ENCODE measurements at regions of chrX and their contacts with region 1.

Region 1: GRCh38 chrX:70618467-70618866 is 173.8 kb downstream of the DLG3 start:
- DNase-seq: no peak
- H3K4me3 ChIP-seq: no peak overlapping the region
- H3K27ac ChIP-seq: no peak overlapping the region
- H3K4me1 ChIP-seq: no peaks in the 10 kb centered on the region
- H3K27me3 ChIP-seq: no peaks in the 10 kb centered on the region
- CTCF ChIP-seq: no peak
- POLR2A ChIP-seq: no peak

Region 2: DNA sequence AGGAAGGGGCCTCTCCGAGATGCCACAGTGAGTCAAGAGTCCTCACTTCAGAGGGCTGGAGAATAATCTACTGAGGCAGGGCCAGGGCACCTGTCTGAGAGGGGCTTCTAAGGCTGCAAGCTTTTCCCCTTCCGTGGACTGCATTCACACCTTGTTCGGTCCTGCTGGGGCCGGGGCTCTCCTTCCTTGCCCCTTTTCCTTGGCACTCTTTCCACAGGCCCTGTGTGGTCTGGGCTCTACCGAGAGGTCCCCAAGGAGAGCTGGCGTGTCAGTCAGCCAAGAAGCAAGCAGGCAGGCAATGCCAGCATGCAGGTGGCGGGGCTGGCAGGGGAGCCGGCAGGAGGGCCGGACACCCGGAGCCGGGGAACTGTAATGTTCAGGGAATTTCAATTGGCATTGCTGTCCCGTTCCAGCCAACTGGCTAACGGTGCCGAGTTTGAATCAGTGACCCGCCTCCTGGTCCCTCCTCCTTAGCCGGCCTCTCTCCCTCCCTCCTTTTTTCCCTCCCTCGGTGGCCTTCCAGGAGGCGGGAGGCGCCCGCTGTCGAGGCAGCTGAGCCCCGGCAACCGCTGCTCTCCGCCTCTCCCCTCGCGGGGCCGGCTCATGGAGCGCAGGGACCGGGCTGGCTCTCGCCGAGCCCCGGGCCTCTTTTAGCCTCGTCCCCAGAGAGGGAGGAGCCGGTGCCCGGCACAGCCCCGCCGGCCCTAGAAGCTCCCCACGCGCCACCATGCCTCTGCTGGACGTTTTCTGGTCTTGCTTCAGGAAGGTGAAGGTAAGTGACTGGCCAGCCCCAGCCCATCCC is 1971.1 kb before region 1 on chrX and contains the start of gene STARD8:
- intact Hi-C with region 1: loop called (anchors 5 kb)
- DNase-seq: peak in 1 of 2 donors; percentile 71
- H3K4me3 ChIP-seq: peak within 1 kb of the TSS in 1 of 2 donors; percentile 25
- H3K27ac ChIP-seq: no peak within 1 kb of the TSS
- H3K4me1 ChIP-seq: peaks cover 7% of the 10 kb centered on the region
- H3K27me3 ChIP-seq: no peaks in the 10 kb centered on the region
- CTCF ChIP-seq: no peak
- POLR2A ChIP-seq: no peak
- total RNA-seq, gene STARD8: 14.0 TPM

Region 3: GRCh38 chrX:70592091-70592490 is 26.4 kb before region 1 on chrX:
- intact Hi-C with region 1: no loop called
- DNase-seq: no peak
- H3K4me3 ChIP-seq: no peak overlapping the region
- H3K27ac ChIP-seq: no peak overlapping the region
- H3K4me1 ChIP-seq: no peaks in the 10 kb centered on the region
- H3K27me3 ChIP-seq: no peaks in the 10 kb centered on the region
- CTCF ChIP-seq: no peak
- POLR2A ChIP-seq: no peak